Naive thymus-derived CD4-positive, alpha-beta T cell (primary cell): ENCODE measurements at regions of chr1 and their contacts with region 1.

Region 1: GRCh38 chr1:89865498-89866385 is 44.9 kb downstream of the LRRC8D start:
- DNase-seq: no peak
- ATAC-seq: no peak
- H3K4me3 ChIP-seq: no peak overlapping the region
- H3K4me3 Mint-ChIP-seq: no peak overlapping the region
- H3K27ac ChIP-seq: no peak overlapping the region
- H3K27ac Mint-ChIP-seq: peak overlapping the region in 5 of 9 donors; percentile 0 to 49 (median 42)
- H3K4me1 ChIP-seq: peaks cover 8 to 23% of the 10 kb centered on the region in 2 donors
- H3K4me1 Mint-ChIP-seq: peaks cover 37 to 87% (median 69%) of the 10 kb centered on the region in 7 donors
- H3K27me3 ChIP-seq: no peaks in the 10 kb centered on the region
- H3K27me3 Mint-ChIP-seq: no peaks in the 10 kb centered on the region

Region 2: DNA sequence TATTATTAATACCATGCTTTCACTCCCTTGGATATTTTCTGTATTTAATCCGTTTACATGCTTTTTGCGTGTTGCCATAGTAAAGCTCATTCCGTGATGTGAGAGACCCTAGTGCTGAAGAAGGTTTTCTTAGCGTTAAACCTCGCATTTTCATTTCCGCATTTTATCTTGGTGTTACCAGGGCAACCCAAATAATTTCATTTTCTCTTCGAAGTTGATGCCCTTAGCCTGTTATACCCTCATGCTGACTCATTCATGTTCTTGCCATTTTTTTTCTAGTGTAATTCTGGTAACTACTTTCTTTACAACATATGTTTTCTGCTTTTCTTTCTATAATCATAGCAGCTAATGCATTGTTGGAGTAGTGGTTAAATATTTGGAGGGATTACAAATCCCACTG is 195.6 kb before region 1 on chr1:
- CTCF ChIA-PET with region 1: no interaction called
- POLR2A ChIA-PET with region 1: no interaction called
- intact Hi-C with region 1: no loop called
- DNase-seq: peak in 5 of 9 donors; percentile 10 to 23 (median 20)
- ATAC-seq: peak; percentile 88
- H3K4me3 ChIP-seq: no peak overlapping the region
- H3K4me3 Mint-ChIP-seq: peak overlapping the region in 9 of 10 donors; percentile 0 to 68 (median 22)
- H3K27ac ChIP-seq: no peak overlapping the region
- H3K27ac Mint-ChIP-seq: peak overlapping the region in 6 of 9 donors; percentile 4 to 87 (median 36)
- H3K4me1 ChIP-seq: peaks cover 48 to 50% of the 10 kb centered on the region in 2 donors
- H3K4me1 Mint-ChIP-seq: peaks cover 64 to 100% (median 98%) of the 10 kb centered on the region in 7 donors
- H3K27me3 ChIP-seq: no peaks in the 10 kb centered on the region
- H3K27me3 Mint-ChIP-seq: no peaks in the 10 kb centered on the region

Region 3: DNA sequence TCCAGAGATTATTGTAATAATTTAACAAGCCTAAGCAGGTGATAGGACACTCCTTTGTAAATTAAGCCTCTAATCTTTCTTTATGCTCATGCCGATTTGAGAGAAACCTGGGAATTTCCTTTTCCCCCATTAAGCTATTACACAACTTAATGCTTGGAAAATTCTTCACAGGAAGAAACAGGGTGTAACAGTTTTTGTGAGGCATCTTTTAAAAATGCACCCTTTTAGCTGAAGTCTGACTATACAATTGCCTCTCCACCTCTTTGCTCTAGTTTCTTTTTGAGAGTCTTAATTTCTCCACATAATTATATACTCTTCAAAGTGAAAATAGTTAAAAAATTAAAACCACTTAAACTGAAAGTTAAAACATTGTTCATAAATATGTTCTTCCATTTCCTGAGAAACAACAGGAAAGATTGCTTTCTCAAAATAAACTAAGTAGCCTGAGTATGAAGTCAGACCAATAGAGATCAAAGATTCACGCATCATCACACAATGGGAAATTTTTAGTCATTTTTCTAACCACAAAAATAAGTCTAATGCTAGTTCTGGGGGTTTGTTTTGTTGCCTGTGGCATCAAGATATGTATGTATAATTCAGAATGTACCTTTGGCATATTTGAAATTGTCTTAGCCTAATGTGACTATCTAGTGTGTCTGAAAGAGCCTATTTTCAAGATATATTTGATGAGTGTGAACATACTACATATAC is 10.2 kb before region 1 on chr1:
- CTCF ChIA-PET with region 1: no interaction called
- POLR2A ChIA-PET with region 1: interaction called, 6 read pairs
- intact Hi-C with region 1: loop called in 1 of 2 experiments (anchors 1 kb)
- DNase-seq: peak in 7 of 9 donors; percentile 45 to 80 (median 67)
- ATAC-seq: peak; percentile 91
- H3K4me3 ChIP-seq: peak overlapping the region; percentile 2
- H3K4me3 Mint-ChIP-seq: peak overlapping the region in 5 of 10 donors; percentile 35 to 87 (median 53)
- H3K27ac ChIP-seq: peak overlapping the region; percentile 72
- H3K27ac Mint-ChIP-seq: no peak overlapping the region
- H3K4me1 ChIP-seq: peaks cover 21 to 29% of the 10 kb centered on the region in 2 donors
- H3K4me1 Mint-ChIP-seq: peaks cover 6 to 31% (median 8%) of the 10 kb centered on the region in 7 donors
- H3K27me3 ChIP-seq: no peaks in the 10 kb centered on the region
- H3K27me3 Mint-ChIP-seq: no peaks in the 10 kb centered on the region

Region 4: DNA sequence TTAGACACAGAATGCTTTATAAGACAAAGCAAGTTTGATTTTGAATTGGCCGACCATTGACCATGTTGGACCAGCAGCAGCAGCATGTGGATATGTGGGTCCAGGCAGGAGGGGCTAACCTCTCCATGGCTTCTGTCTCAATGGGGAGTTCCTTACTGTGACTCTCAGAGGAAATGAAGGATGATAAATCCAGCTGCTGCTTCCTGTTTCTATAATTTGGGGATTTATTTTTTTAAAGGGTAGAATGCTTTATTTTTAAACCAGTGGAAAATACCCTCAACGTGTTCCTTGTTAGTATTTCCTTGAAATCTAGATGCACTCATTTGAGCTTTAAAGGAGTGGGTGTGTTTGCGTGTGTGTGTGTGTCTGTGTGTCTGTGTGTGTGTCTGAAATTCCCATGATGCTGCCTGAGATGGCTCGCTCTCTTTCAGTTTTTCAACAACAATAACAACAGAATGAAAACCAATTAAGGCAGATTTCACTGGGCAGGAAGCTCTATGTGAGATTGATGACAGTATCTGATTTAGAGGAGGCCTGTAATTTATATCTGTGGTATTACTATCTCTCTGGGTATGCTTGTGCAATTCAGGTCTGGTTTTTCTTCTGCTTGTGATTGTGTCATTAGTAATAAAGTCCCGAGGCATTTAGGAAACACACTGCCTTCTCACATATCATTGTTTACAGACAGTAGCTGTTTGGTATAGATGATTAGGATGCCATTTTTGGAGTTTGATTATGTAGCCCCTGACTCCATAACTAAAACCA is 43.1 kb after region 1 on chr1:
- CTCF ChIA-PET with region 1: no interaction called
- POLR2A ChIA-PET with region 1: no interaction called
- intact Hi-C with region 1: no loop called
- DNase-seq: no peak
- ATAC-seq: peak; percentile 67
- H3K4me3 ChIP-seq: no peak overlapping the region
- H3K4me3 Mint-ChIP-seq: peak overlapping the region in 1 of 10 donors; percentile 18
- H3K27ac ChIP-seq: no peak overlapping the region
- H3K27ac Mint-ChIP-seq: peak overlapping the region in 8 of 9 donors; percentile 13 to 70 (median 30)
- H3K4me1 ChIP-seq: no peaks in the 10 kb centered on the region
- H3K4me1 Mint-ChIP-seq: peaks cover 32 to 72% (median 53%) of the 10 kb centered on the region in 7 donors
- H3K27me3 ChIP-seq: no peaks in the 10 kb centered on the region
- H3K27me3 Mint-ChIP-seq: no peaks in the 10 kb centered on the region